Naive thymus-derived CD4-positive, alpha-beta T cell (primary cell): ENCODE measurements at regions of chr2 and their contacts with region 1.

Region 1: GRCh38 chr2:68121873-68122679 is 35.6 kb upstream of the PNO1 start:
- DNase-seq: peak; percentile 46 to 76 (median 58)
- ATAC-seq: peak; percentile 78
- H3K4me3 ChIP-seq: no peak overlapping the region
- H3K4me3 Mint-ChIP-seq: peak overlapping the region in 3 of 10 donors; percentile 31 to 69 (median 47)
- H3K27ac ChIP-seq: no peak overlapping the region
- H3K27ac Mint-ChIP-seq: peak overlapping the region in 2 of 9 donors; percentile 31 to 57
- H3K4me1 ChIP-seq: no peaks in the 10 kb centered on the region
- H3K4me1 Mint-ChIP-seq: peaks cover 0 to 20% (median 5%) of the 10 kb centered on the region in 7 donors
- H3K27me3 ChIP-seq: no peaks in the 10 kb centered on the region
- H3K27me3 Mint-ChIP-seq: peaks cover 0 to 6% (median 0%) of the 10 kb centered on the region in 5 donors

Region 2: GRCh38 chr2:68157402-68158133 is 35.5 kb after region 1 on chr2 and contains the start of gene PNO1:
- CTCF ChIA-PET with region 1: interaction called, 7 read pairs
- POLR2A ChIA-PET with region 1: no interaction called
- intact Hi-C with region 1: loop called in 1 of 2 experiments (anchors 2 kb)
- DNase-seq: peak; percentile 95 to 100 (median 98)
- ATAC-seq: peak; percentile 98
- H3K4me3 ChIP-seq: peak within 1 kb of the TSS; percentile 93
- H3K4me3 Mint-ChIP-seq: peak within 1 kb of the TSS; percentile 84 to 99 (median 94)
- H3K27ac ChIP-seq: peak within 1 kb of the TSS; percentile 87
- H3K27ac Mint-ChIP-seq: peak within 1 kb of the TSS; percentile 96 to 100 (median 99)
- H3K4me1 ChIP-seq: peaks cover 19 to 38% of the 10 kb centered on the region in 2 donors
- H3K4me1 Mint-ChIP-seq: peaks cover 30 to 72% (median 58%) of the 10 kb centered on the region in 7 donors
- H3K27me3 ChIP-seq: no peaks in the 10 kb centered on the region
- H3K27me3 Mint-ChIP-seq: no peaks in the 10 kb centered on the region
- total RNA-seq, gene PNO1: 11.0 to 31.0 (median 12.8) TPM

Region 3: DNA sequence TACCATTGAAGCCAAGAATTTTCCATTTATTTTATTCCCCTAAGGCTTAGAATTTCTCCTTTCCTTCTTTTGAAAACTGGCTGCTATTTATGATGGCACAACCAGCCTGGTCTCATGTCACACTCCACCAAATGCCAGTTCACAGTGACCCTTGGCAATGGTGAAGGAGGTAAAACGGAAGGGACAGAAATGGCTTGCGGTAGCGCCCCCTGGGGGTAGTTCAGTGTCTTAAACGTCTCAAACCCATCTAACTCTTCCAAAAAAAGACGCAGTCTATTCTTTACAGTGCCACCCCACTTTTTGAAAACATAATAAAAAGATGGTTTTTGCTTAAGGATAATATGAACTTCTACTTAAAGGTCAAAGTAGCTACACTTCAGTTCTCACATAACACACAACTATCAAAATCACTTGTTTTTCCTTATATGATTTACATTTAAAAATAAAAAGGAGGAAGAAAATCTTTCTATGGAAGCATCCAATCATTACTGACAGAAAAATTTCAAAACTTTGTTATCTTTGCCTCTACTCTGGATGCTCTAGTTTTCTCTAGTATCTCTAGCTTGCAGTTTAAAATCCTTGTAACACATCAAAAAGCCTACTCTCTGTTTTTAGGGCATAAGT is 63.6 kb after region 1 on chr2:
- CTCF ChIA-PET with region 1: interaction called, 4 read pairs
- POLR2A ChIA-PET with region 1: no interaction called
- intact Hi-C with region 1: loop called (anchors 1 kb)
- DNase-seq: peak; percentile 28 to 55 (median 47)
- ATAC-seq: peak; percentile 87
- H3K4me3 ChIP-seq: no peak overlapping the region
- H3K4me3 Mint-ChIP-seq: no peak overlapping the region
- H3K27ac ChIP-seq: no peak overlapping the region
- H3K27ac Mint-ChIP-seq: peak overlapping the region in 7 of 9 donors; percentile 51 to 87 (median 73)
- H3K4me1 ChIP-seq: no peaks in the 10 kb centered on the region
- H3K4me1 Mint-ChIP-seq: peaks cover 22 to 66% (median 58%) of the 10 kb centered on the region in 7 donors
- H3K27me3 ChIP-seq: no peaks in the 10 kb centered on the region
- H3K27me3 Mint-ChIP-seq: no peaks in the 10 kb centered on the region

Region 4: DNA sequence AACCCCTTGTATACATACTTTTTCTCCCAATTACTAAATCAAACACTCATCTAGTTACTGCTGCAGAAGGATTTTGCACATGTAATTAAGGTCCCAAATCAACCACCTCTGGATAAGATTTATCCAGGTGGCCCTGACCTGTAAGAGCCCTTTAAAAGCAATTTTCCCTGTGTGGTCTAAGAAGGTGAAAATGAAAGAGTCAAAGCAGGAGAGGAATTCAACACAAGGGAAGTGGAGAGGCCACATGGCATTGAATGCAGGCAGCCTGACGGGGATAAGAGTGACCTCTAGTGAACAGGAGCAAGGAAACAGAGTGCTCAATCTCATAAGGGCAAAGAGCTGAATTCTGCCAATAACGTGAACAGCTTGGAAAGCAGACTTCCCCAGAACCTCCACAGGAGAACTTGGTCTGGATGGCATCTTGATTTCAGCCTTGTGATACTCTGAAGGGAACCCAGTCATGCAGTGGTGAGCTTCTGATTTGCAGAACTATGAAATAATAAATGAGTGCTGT is 103.1 kb after region 1 on chr2:
- CTCF ChIA-PET with region 1: no interaction called
- POLR2A ChIA-PET with region 1: no interaction called
- intact Hi-C with region 1: loop called in 1 of 2 experiments (anchors 1 kb)
- DNase-seq: peak in 3 of 9 donors; percentile 14 to 27 (median 23)
- ATAC-seq: peak; percentile 86
- H3K4me3 ChIP-seq: no peak overlapping the region
- H3K4me3 Mint-ChIP-seq: peak overlapping the region in 9 of 10 donors; percentile 4 to 66 (median 52)
- H3K27ac ChIP-seq: no peak overlapping the region
- H3K27ac Mint-ChIP-seq: peak overlapping the region in 8 of 9 donors; percentile 5 to 61 (median 24)
- H3K4me1 ChIP-seq: peaks cover 20 to 41% of the 10 kb centered on the region in 2 donors
- H3K4me1 Mint-ChIP-seq: peaks cover 71 to 100% (median 98%) of the 10 kb centered on the region in 7 donors
- H3K27me3 ChIP-seq: no peaks in the 10 kb centered on the region
- H3K27me3 Mint-ChIP-seq: no peaks in the 10 kb centered on the region

Region 5: DNA sequence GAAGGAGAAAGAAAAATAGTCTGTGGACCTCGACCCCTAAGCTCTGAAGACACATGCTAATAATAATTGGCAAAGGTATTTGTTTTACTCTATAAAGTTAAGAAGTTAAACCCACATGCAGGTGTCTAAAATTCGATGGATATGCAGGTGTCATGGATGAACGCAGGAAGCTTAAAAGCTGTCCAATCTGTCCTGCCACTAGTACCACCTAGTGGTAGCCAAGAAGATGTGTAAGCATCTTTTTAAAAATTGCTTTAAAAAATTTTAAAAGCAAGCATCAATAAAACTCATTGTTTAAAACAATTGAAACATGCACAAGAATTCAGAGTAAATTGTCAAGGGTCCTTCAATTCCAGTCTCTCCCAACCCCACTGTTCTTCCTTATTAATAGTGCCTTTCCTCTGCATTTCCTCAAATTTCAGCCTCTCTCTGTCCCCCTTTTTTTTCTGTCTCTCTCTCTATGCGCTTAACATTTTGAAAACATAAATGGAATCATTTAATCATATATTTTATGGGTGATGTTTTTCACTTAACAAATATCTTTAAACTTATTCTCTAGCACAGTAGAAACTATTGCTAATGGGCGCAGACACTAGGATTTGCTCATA is 160.8 kb after region 1 on chr2:
- CTCF ChIA-PET with region 1: interaction called, 38 read pairs
- POLR2A ChIA-PET with region 1: no interaction called
- intact Hi-C with region 1: loop called (anchors 1 kb)
- DNase-seq: peak in 7 of 9 donors; percentile 28 to 54 (median 43)
- ATAC-seq: peak; percentile 81
- H3K4me3 ChIP-seq: no peak overlapping the region
- H3K4me3 Mint-ChIP-seq: no peak overlapping the region
- H3K27ac ChIP-seq: no peak overlapping the region
- H3K27ac Mint-ChIP-seq: no peak overlapping the region
- H3K4me1 ChIP-seq: no peaks in the 10 kb centered on the region
- H3K4me1 Mint-ChIP-seq: peaks cover 0 to 4% (median 0%) of the 10 kb centered on the region in 7 donors
- H3K27me3 ChIP-seq: no peaks in the 10 kb centered on the region
- H3K27me3 Mint-ChIP-seq: peaks cover 5 to 46% (median 16%) of the 10 kb centered on the region in 5 donors

Region 6: DNA sequence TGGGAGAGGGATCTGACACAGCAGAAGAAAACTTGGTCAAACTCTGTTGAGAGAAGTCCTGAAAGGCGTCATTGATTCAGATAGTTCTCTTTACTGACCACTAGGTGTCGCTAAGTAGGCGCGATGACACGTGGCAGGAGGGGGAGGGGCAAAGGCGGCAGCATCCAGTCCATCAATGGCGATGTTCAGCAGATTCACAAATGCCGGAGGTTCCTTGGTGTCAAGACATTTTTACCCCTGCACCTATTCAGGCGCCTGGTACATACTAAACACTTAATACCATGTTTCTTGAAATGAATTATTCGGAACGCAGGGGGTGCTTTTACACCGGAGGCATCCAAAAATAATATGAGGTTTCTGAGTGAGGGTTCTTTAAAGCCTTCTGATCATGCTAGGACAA is 240.0 kb after region 1 on chr2:
- CTCF ChIA-PET with region 1: no interaction called
- POLR2A ChIA-PET with region 1: no interaction called
- intact Hi-C with region 1: loop called in 1 of 2 experiments (anchors 2 kb)
- DNase-seq: peak; percentile 62 to 81 (median 76)
- ATAC-seq: peak; percentile 87
- H3K4me3 ChIP-seq: peak overlapping the region; percentile 37
- H3K4me3 Mint-ChIP-seq: peak overlapping the region in 9 of 10 donors; percentile 21 to 87 (median 74)
- H3K27ac ChIP-seq: no peak overlapping the region
- H3K27ac Mint-ChIP-seq: peak overlapping the region in 6 of 9 donors; percentile 10 to 81 (median 18)
- H3K4me1 ChIP-seq: peaks cover 0 to 20% of the 10 kb centered on the region in 2 donors
- H3K4me1 Mint-ChIP-seq: peaks cover 6 to 19% (median 10%) of the 10 kb centered on the region in 7 donors
- H3K27me3 ChIP-seq: no peaks in the 10 kb centered on the region
- H3K27me3 Mint-ChIP-seq: peaks cover 0 to 23% (median 0%) of the 10 kb centered on the region in 5 donors

Region 7: GRCh38 chr2:68441179-68441993 is 319.3 kb after region 1 on chr2:
- CTCF ChIA-PET with region 1: interaction called, 16 read pairs
- POLR2A ChIA-PET with region 1: no interaction called
- intact Hi-C with region 1: loop called (anchors 1 kb)
- DNase-seq: peak; percentile 52 to 79 (median 72)
- ATAC-seq: peak; percentile 97
- H3K4me3 ChIP-seq: no peak overlapping the region
- H3K4me3 Mint-ChIP-seq: no peak overlapping the region
- H3K27ac ChIP-seq: no peak overlapping the region
- H3K27ac Mint-ChIP-seq: peak overlapping the region in 4 of 9 donors; percentile 11 to 72 (median 40)
- H3K4me1 ChIP-seq: peaks cover 0 to 22% of the 10 kb centered on the region in 2 donors
- H3K4me1 Mint-ChIP-seq: peaks cover 0 to 16% (median 5%) of the 10 kb centered on the region in 7 donors
- H3K27me3 ChIP-seq: no peaks in the 10 kb centered on the region
- H3K27me3 Mint-ChIP-seq: peaks cover 0 to 19% (median 0%) of the 10 kb centered on the region in 5 donors